A549 (cell line): ENCODE measurements at regions of chr9 and their contacts with region 1.

Region 1: GRCh38 chr9:37913480-37914153 is 9.7 kb upstream of the SLC25A51 start:
- DNase-seq: peak; percentile 78 to 86
- ATAC-seq: peak; percentile 73 to 85
- H3K4me3 ChIP-seq: no peak overlapping the region
- H3K27ac ChIP-seq: peak overlapping the region; percentile 7 to 73; a peak in 4 of 6 replicates
- H3K4me1 ChIP-seq: peaks cover 31% of the 10 kb centered on the region
- CTCF ChIP-seq: peak; percentile 96
- EP300 ChIP-seq: no peak
- POLR2A ChIP-seq: no peak
- RAD21 ChIP-seq: peak; percentile 99

Region 2: DNA sequence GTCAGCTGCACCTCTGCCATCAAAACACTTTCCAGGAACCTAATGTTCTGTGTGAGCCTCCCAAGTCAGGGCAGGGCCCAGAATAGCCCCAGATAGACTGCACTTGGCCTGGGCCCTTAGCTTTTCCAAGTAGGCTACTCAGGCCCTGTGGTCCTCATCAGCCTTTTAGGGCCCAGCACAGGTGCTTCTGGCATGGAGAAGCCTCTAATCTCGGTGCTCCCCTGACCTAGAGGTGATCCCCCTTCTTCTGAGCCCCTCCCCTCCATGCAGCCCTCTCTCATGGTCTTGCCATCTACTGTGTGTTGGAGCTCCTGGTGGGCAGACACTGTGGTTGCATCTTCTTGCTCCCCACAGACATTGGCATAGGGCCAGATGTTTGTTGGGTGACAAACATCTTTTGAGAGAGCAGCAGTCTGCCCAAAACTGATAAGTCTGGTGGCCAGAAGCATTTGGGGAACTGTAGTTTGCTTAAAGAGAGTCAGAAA is 234.8 kb before region 1 on chr9:
- CTCF ChIA-PET with region 1: no interaction called
- POLR2A ChIA-PET with region 1: no interaction called
- DNase-seq: peak in 1 of 2 experiments; percentile 17
- ATAC-seq: peak in 1 of 2 experiments; percentile 68; a peak in 3 of 6 replicates
- H3K4me3 ChIP-seq: no peak overlapping the region
- H3K27ac ChIP-seq: no peak overlapping the region
- H3K4me1 ChIP-seq: no peaks in the 10 kb centered on the region
- CTCF ChIP-seq: no peak
- EP300 ChIP-seq: no peak
- POLR2A ChIP-seq: no peak
- RAD21 ChIP-seq: no peak

Region 3: GRCh38 chr9:37963936-37964739 is 50.5 kb after region 1 on chr9:
- CTCF ChIA-PET with region 1: interaction called, 19 read pairs
- POLR2A ChIA-PET with region 1: no interaction called
- DNase-seq: peak; percentile 54 to 83
- ATAC-seq: peak; percentile 59 to 78; a peak in 4 of 6 replicates
- H3K4me3 ChIP-seq: no peak overlapping the region
- H3K27ac ChIP-seq: peak overlapping the region; percentile 74 to 85
- H3K4me1 ChIP-seq: peaks cover 60% of the 10 kb centered on the region
- CTCF ChIP-seq: no peak
- EP300 ChIP-seq: peak in 1 of 2 experiments; percentile 29; a peak in 1 of 5 replicates
- POLR2A ChIP-seq: no peak
- RAD21 ChIP-seq: no peak; a peak in 1 of 5 replicates

Region 4: DNA sequence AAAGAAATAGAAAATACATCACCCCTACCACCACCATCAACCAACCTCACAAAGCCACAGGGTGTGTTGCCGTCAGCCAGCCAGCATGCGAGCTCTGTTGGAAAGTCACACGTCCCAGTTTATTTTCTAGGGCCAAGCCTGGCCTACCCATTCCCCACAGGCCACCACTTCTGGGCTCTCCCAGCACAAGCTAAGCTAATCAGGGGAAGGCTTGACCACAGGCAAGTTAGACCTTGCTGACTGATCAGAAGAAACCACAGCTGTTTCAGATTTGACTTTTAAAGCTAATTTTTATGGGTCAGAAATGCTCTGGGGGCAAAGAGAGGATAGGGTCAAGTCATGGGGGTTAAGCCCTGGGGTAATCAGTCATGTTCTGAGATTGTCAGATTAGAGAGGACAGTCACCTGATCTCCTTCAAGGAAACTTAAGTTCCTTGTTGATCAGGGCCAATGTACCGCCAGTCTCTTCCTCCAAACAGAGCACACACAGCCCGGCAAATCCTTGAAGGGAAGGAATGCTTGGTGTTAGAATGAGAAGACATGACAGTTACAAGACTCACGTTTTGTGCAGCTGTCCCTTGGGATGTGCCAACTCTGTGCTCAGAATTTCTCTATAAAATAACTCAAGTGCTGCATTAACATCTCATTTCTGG is 147.8 kb after region 1 on chr9:
- CTCF ChIA-PET with region 1: interaction called, 16 read pairs
- POLR2A ChIA-PET with region 1: no interaction called
- DNase-seq: no peak
- ATAC-seq: no peak
- H3K4me3 ChIP-seq: no peak overlapping the region
- H3K27ac ChIP-seq: peak overlapping the region in 1 of 2 experiments; percentile 81; a peak in 4 of 6 replicates
- H3K4me1 ChIP-seq: peaks cover 99% of the 10 kb centered on the region
- CTCF ChIP-seq: no peak
- EP300 ChIP-seq: no peak
- POLR2A ChIP-seq: no peak
- RAD21 ChIP-seq: no peak

Region 5: GRCh38 chr9:38263532-38263931 is 349.9 kb after region 1 on chr9:
- CTCF ChIA-PET with region 1: interaction called, 55 read pairs
- POLR2A ChIA-PET with region 1: no interaction called
- DNase-seq: peak in 1 of 2 experiments; percentile 49
- ATAC-seq: peak; percentile 56 to 64; a peak in 5 of 6 replicates
- H3K4me3 ChIP-seq: no peak overlapping the region
- H3K27ac ChIP-seq: peak overlapping the region in 1 of 2 experiments; percentile 14; a peak in 1 of 6 replicates
- H3K4me1 ChIP-seq: no peaks in the 10 kb centered on the region
- CTCF ChIP-seq: peak; percentile 56
- EP300 ChIP-seq: no peak
- POLR2A ChIP-seq: no peak
- RAD21 ChIP-seq: peak; percentile 80 to 82

Region 6: DNA sequence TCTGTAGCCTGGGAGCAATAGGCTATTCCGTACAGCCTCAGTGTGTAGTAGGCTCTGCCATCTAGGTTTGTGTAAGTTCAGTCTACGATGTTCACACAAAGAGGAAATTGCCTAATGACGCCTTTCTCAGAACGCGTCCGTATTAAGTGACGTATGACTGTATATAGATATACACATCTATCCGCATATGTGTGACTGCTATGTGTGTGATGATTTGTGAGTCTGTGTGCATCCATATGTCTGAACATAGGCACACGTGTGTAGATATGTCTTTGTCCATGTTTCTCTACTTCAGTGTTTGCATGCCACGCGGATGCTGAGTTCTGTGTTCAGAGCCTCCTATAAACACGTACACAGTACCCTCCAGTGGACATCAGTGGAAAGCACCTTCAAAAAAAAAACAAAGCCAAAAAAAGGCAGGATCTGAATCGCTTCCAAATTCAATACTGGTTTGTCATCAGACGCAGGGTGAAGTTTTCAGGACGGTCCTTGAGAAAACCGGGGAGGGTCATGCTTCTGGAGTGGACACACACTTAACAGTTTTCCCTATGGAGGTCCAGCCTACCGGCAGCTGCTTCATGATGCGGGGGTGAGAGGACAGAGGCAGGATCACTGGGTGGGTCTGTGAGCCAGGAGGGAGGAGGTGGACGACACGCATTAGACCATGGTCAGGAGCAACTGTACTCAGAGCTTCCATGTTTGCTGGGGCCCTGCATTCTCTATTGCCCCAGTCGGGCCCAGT is 449.4 kb after region 1 on chr9:
- CTCF ChIA-PET with region 1: interaction called, 68 read pairs
- POLR2A ChIA-PET with region 1: no interaction called
- DNase-seq: peak; percentile 60 to 72
- ATAC-seq: peak; percentile 81 to 87
- H3K4me3 ChIP-seq: no peak overlapping the region
- H3K27ac ChIP-seq: peak overlapping the region in 1 of 2 experiments; percentile 46; a peak in 2 of 6 replicates
- H3K4me1 ChIP-seq: 0 out of 3 replicates have a peak, but pooled peaks cover 4% of the 10 kb centered on the region
- CTCF ChIP-seq: peak; percentile 84
- EP300 ChIP-seq: no peak
- POLR2A ChIP-seq: no peak
- RAD21 ChIP-seq: peak; percentile 91 to 95